SK-N-SH (cell line): ENCODE measurements at regions of chr13 and their contacts with region 1.

Region 1: GRCh38 chr13:44470638-44471562 is 97.3 kb downstream of the SERP2 start:
- DNase-seq: no peak
- H3K4me3 ChIP-seq: no peak overlapping the region; a peak in 2 of 4 replicates
- H3K27ac ChIP-seq: peak overlapping the region; percentile 18 to 84
- H3K4me1 ChIP-seq: peaks cover 10 to 41% of the 10 kb centered on the region in 2 experiments; a peak in 3 of 4 replicates
- H3K27me3 ChIP-seq: no peaks in the 10 kb centered on the region
- CTCF ChIP-seq: peak; percentile 61
- EP300 ChIP-seq: no peak
- RAD21 ChIP-seq: peak; percentile 76

Region 2: DNA sequence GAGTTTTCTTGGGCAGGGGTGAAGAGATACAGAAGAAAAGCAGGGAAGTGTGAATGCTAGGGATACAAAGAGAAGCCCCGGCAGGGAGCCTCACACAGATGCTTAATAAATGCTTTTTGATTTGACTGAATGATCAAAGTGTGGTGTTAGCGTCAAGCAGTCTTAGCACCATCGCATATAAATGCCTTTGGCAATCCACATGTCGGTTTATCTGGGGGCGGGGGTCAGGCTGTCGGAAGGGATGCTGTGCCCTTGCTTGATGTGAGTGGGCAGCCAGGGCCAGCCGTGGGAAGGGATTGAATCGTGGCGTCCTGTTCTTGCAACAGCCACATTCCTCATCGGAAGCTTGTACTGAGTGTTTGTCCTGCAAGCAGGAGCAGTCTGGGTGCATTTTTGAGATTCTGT is 418.1 kb before region 1 on chr13:
- CTCF ChIA-PET with region 1: interaction called, 13 read pairs
- POLR2A ChIA-PET with region 1: no interaction called
- DNase-seq: no peak
- H3K4me3 ChIP-seq: no peak overlapping the region
- H3K27ac ChIP-seq: no peak overlapping the region
- H3K4me1 ChIP-seq: no peaks in the 10 kb centered on the region; a peak in 2 of 4 replicates
- H3K27me3 ChIP-seq: no peaks in the 10 kb centered on the region
- CTCF ChIP-seq: no peak
- EP300 ChIP-seq: no peak
- RAD21 ChIP-seq: no peak

Region 3: GRCh38 chr13:44458313-44458975 is 12.5 kb before region 1 on chr13:
- CTCF ChIA-PET with region 1: interaction called, 28 read pairs
- POLR2A ChIA-PET with region 1: no interaction called
- DNase-seq: no peak
- H3K4me3 ChIP-seq: no peak overlapping the region
- H3K27ac ChIP-seq: no peak overlapping the region
- H3K4me1 ChIP-seq: peaks cover 0 to 3% of the 10 kb centered on the region in 2 experiments; a peak in 2 of 4 replicates
- H3K27me3 ChIP-seq: no peaks in the 10 kb centered on the region
- CTCF ChIP-seq: no peak
- EP300 ChIP-seq: no peak
- RAD21 ChIP-seq: no peak